Dorsolateral prefrontal cortex (tissue), 120 donors: ENCODE measurements at regions of chr21 and their contacts with region 1.

Region 1: GRCh38 chr21:28336314-28336713 is 656.4 kb downstream of the LTN1 start:
- DNase-seq: peak in 1 of 10 donors; percentile 14
- H3K4me3 ChIP-seq: peak overlapping the region in 1 of 59 donors; percentile 38
- H3K27ac ChIP-seq: peak overlapping the region in 52 of 59 donors; percentile 9 to 99 (median 94)
- H3K27me3 ChIP-seq: no peaks in the 10 kb centered on the region
- CTCF ChIP-seq: peak; percentile 30 to 89 (median 68)

Region 2: DNA sequence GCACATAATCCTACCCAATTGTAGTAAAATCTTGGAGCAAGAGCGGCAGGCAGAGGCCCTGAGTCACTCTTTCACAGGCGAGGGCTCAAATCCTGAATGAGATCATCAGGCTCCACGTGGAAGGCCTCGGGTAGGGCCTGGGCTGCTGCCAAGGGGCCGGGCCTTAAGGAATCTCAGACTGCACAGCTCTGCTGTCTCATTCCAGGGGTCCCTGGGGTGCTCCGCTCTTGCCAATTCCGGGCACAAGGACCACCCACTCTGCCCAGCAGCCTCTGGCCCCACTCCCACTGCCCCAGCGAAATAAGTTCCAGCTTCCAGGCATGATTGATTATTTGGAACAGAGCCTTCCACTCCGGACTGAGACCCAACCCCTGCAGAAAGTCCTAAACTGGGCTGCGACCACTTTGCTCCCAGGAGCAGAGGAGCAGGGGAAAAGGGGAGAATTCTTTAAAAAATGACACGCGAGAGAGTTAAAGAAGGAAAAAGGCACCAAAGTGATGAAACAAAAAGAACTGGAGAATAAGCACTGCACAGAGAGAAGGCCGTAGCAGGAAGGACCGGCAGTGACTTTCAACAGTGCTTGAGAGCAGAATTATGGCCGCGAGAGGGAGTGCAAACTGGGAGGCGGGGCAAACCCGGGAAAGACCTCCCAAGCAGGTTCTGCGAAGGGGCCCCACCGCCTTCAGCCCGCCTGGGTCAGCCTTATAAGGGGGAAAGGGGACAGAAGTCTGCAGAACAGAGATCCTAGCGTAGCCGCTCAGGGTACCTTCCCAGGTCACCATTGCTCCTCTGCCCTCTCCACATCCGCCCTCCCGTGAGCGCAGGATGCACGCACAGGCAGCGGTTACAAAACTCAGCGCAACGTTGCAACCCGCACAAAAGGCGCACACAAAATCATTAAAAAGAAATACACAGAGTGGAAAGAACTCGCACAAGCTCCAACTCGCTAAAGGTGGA is 1493.1 kb before region 1 on chr21:
- intact Hi-C with region 1: loop called in 1 of 2 experiments (anchors 5 kb)
- DNase-seq: peak; percentile 76 to 95 (median 89)
- H3K4me3 ChIP-seq: peak overlapping the region; percentile 63 to 94 (median 84)
- H3K27ac ChIP-seq: peak overlapping the region in 58 of 59 donors; percentile 45 to 100 (median 99)
- H3K27me3 ChIP-seq: no peaks in the 10 kb centered on the region
- CTCF ChIP-seq: peak in 42 of 56 donors; percentile 6 to 57 (median 35)

Region 3: DNA sequence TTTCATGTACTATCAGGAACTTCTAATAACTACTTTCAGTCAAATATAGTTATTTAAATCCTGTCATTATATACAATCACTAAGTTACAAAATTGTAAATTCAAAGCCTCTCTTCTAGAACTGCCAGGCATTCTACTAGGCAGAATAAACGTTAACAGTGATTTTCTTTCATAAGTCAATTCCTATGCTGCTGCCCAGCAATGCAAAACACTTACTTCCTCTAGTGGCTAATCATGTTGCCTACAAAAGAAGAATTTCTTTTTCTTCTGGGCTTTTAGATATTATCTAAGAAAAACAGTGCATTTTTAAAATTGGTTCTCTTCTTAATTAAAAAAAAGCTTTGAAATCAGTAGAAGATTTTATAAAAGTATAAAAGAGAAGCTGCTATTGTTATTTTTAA is 859.6 kb before region 1 on chr21:
- intact Hi-C with region 1: loop called in 1 of 2 experiments (anchors 10 kb)
- DNase-seq: no peak
- H3K4me3 ChIP-seq: no peak overlapping the region
- H3K27ac ChIP-seq: peak overlapping the region in 9 of 59 donors; percentile 20 to 85 (median 71)
- H3K27me3 ChIP-seq: peaks cover 0 to 9% (median 0%) of the 10 kb centered on the region in 45 donors
- CTCF ChIP-seq: peak in 53 of 56 donors; percentile 18 to 81 (median 57)

Region 4: DNA sequence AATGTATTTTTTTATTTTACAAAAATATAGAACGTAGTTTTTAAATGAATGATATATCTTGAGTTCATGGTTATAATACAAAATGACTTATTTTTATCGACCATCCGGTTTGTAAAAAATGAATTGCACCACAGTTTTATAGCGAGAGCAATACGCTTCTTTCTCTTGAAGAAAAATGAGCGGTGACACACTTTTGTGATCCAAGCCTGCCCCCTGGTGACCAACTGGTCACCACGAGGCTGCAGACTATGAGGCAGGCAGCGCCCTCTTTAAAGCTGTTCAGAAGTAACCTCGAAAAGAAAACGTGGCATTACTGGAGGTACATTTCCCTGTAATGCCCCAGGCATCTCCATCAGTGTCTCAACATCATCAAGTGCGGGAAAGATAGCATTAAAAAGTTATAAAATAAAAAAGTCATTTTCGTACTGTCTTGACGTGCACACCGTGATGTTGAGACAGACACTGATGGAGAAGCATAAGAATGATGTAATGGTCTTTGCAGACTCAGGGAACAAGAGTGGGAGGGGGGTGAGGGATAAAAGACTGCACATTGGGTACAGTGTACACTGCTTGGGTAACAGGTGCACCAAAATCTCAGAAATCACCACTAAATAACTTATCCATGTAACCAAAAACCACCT is 635.2 kb before region 1 on chr21:
- intact Hi-C with region 1: loop called (anchors 5 kb)
- DNase-seq: peak; percentile 71 to 90 (median 85)
- H3K4me3 ChIP-seq: peak overlapping the region in 43 of 59 donors; percentile 8 to 57 (median 31)
- H3K27ac ChIP-seq: peak overlapping the region in 9 of 59 donors; percentile 9 to 71 (median 39)
- H3K27me3 ChIP-seq: peaks cover 0 to 5% (median 0%) of the 10 kb centered on the region in 45 donors
- CTCF ChIP-seq: peak; percentile 73 to 100 (median 97)

Region 5: GRCh38 chr21:28025111-28025510 is 311.2 kb before region 1 on chr21:
- intact Hi-C with region 1: loop called in 1 of 2 experiments (anchors 10 kb)
- DNase-seq: no peak
- H3K4me3 ChIP-seq: no peak overlapping the region
- H3K27ac ChIP-seq: no peak overlapping the region
- H3K27me3 ChIP-seq: no peaks in the 10 kb centered on the region
- CTCF ChIP-seq: no peak